Heart right ventricle (tissue), 16 donors: ENCODE measurements at regions of chr18 and their contacts with region 1.

Region 1: GRCh38 chr18:51197661-51198424 is at the start of gene MEX3C:
- DNase-seq: peak; percentile 99 to 100
- ATAC-seq: peak; percentile 93 to 98 (median 96)
- H3K4me3 ChIP-seq: peak within 1 kb of the TSS; percentile 73 to 96 (median 90)
- H3K27ac ChIP-seq: peak within 1 kb of the TSS; percentile 89 to 99 (median 96)
- H3K4me1 ChIP-seq: peaks cover 0 to 33% (median 28%) of the 10 kb centered on the region in 9 donors
- H3K27me3 ChIP-seq: no peaks in the 10 kb centered on the region
- CTCF ChIP-seq: peak in 7 of 9 donors; percentile 16 to 65 (median 50)
- total RNA-seq, gene MEX3C: 17.2 to 24.2 (median 20.1) TPM

Region 2: DNA sequence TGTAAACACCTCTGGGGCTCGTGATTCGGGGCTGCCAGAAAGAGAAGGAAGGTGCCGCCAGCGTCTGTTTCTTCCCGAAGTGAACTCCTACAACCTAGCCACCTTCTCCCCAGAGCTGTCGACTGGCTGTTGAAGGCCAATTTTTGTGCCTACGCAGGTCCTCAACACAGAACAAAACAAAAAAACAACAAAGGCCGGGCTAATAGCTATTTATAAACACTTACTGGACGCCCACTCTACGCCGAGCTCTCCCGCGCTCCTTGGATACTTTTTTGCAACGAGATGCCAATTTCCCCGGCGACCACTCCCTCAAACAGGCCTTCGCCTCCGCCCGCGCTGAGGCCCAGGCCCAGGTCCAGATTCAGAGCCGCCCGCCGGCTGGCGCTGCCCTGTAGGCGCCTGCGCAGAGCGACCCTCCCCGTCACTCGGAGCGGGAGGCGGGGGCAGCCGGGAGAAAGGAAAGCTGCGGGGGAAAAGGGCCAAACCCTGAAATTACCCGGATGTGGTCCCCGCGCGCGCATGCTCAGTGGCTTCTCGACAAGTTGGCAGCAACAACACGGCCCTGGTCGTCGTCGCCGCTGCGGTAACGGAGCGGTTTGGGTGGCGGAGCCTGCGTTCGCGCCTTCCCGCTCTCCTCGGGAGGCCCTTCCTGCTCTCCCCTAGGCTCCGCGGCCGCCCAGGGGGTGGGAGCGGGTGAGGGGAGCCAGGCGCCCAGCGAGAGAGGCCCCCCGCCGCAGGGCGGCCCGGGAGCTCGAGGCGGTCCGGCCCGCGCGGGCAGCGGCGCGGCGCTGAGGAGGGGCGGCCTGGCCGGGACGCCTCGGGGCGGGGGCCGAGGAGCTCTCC is 167.9 kb before region 1 on chr18 and contains the start of gene SMAD4:
- intact Hi-C with region 1: loop called in 2 of 10 experiments (anchors 10 kb)
- DNase-seq: peak; percentile 97 to 98
- ATAC-seq: peak; percentile 95 to 99 (median 97)
- H3K4me3 ChIP-seq: peak within 1 kb of the TSS; percentile 70 to 94 (median 81)
- H3K27ac ChIP-seq: peak within 1 kb of the TSS; percentile 94 to 100 (median 98)
- H3K4me1 ChIP-seq: peaks cover 2 to 85% (median 54%) of the 10 kb centered on the region in 9 donors
- H3K27me3 ChIP-seq: no peaks in the 10 kb centered on the region
- CTCF ChIP-seq: no peak
- total RNA-seq, gene SMAD4: 78.4 to 110 (median 86.9) TPM

Region 3: DNA sequence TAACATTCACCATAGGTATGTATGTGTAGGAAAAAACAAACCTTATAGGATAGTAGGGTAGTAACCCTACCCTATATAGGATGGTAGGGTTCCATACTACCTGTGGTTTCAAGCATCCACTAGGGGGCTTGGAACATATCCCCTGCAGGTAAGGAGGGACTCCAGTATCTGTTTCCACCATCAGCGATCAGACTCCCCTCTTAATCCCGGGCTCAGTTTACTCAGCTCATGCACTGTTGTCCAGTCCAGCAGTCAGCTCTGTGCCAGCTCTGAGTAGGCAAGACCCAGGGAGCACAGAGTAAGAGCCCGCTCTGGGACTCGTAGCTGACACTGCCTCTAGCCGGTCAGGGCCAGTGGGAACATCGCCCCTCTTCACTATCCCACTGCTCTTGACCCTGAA is 62.0 kb before region 1 on chr18:
- intact Hi-C with region 1: loop called in 1 of 10 experiments (anchors 10 kb)
- DNase-seq: no peak
- ATAC-seq: no peak
- H3K4me3 ChIP-seq: no peak overlapping the region
- H3K27ac ChIP-seq: no peak overlapping the region
- H3K4me1 ChIP-seq: no peaks in the 10 kb centered on the region
- H3K27me3 ChIP-seq: no peaks in the 10 kb centered on the region
- CTCF ChIP-seq: peak in 3 of 9 donors; percentile 15 to 23 (median 19)

Region 4: DNA sequence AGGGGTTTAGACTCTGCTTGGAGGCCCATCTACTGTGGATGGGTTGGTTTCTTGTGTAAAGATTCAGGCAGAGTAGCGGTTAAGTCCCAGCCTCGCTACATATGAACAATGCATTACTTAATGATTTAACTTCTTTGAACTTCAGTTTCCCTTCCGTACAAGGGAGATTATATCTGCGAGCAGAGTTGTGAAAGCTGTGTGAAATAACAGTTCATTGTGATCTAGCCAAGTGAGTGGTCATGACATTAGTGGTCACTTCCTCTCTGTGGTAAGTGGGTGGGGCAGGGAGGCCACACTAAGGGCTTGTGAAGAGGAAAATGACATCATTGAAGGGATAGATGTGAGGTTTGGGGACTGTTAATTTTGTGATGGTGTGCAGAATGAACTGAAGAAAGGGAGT is 13.7 kb after region 1 on chr18:
- intact Hi-C with region 1: loop called in 1 of 10 experiments (anchors 1 kb)
- DNase-seq: peak; percentile 16 to 55
- ATAC-seq: peak; percentile 78 to 97 (median 95)
- H3K4me3 ChIP-seq: no peak overlapping the region
- H3K27ac ChIP-seq: peak overlapping the region in 4 of 10 donors; percentile 18 to 49 (median 36)
- H3K4me1 ChIP-seq: peaks cover 0 to 18% (median 5%) of the 10 kb centered on the region in 9 donors
- H3K27me3 ChIP-seq: no peaks in the 10 kb centered on the region
- CTCF ChIP-seq: no peak

Region 5: DNA sequence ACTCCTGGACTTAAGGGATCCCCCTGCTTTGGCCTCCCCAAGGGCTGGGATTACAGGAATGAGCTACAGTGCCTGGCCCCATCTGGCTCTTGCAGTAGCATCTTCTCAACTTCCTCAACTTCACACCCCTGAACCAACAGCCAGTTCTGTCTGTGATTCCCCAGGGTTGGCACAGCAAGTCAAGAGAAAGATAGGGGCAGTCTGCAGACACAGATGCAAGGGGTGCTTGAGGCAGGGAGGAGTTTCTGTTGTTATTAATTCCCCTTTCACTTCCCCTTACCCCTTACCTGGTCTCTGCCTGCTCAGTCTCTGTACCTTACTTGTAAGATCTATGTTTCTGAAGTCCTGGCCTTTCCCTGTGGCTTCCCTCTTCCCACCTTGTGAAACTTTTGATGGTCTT is 53.8 kb after region 1 on chr18:
- intact Hi-C with region 1: no loop called
- DNase-seq: no peak
- ATAC-seq: no peak
- H3K4me3 ChIP-seq: no peak overlapping the region
- H3K27ac ChIP-seq: no peak overlapping the region
- H3K4me1 ChIP-seq: peaks cover 0 to 3% (median 0%) of the 10 kb centered on the region in 9 donors
- H3K27me3 ChIP-seq: no peaks in the 10 kb centered on the region
- CTCF ChIP-seq: no peak

Region 6: GRCh38 chr18:51316677-51317076 is 118.8 kb after region 1 on chr18:
- intact Hi-C with region 1: no loop called
- DNase-seq: no peak
- ATAC-seq: no peak
- H3K4me3 ChIP-seq: no peak overlapping the region
- H3K27ac ChIP-seq: no peak overlapping the region
- H3K4me1 ChIP-seq: no peaks in the 10 kb centered on the region
- H3K27me3 ChIP-seq: peaks cover 0 to 4% (median 0%) of the 10 kb centered on the region in 7 donors
- CTCF ChIP-seq: no peak

Region 7: GRCh38 chr18:51383116-51383515 is 185.3 kb after region 1 on chr18:
- intact Hi-C with region 1: loop called in 3 of 10 experiments (anchors 5 to 10 kb)
- DNase-seq: no peak
- ATAC-seq: no peak
- H3K4me3 ChIP-seq: no peak overlapping the region
- H3K27ac ChIP-seq: no peak overlapping the region
- H3K4me1 ChIP-seq: no peaks in the 10 kb centered on the region
- H3K27me3 ChIP-seq: no peaks in the 10 kb centered on the region
- CTCF ChIP-seq: no peak